Activated B cell treated with CpG ODN at 0.5 μM for 24 hours (primary cell): ENCODE measurements at regions of chr6 and their contacts with region 1.

Region 1: DNA sequence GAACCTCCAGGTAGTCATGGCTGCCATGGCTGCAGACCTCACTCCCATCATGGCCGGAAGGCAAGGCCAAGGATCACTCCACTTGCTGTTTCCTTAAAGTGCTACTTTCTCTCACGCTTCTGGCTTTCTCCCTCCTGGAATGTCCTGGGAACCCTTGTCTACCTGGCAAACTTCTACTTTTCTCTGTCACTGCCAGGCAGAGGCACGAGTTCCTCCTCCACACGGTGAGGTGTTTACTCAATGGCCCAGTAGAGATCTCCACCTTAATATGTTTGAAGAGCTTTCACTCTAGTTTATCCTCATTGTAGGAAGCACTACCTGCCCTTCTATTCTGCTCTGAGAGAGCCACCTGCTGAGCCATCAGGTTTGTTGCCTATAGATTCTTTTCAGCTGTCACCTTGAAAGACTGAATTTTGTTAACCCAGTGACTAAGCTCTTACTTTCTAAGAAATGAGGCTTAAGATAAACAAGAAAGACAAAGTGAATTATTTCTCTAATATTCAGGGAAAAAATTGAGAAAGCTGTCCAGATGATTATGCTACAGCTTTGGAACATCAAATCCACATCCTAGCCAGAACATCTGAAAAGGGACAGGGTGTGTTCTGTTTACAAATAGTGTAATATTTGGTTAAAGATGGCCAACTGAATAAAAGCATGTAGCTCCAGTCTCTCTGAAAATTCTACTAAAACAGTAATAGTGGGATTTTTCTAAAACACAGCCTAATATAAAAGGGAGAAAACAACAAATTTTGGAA is 54.9 kb downstream of the PLAGL1 start:
- DNase-seq: no peak
- ATAC-seq: no peak
- H3K4me3 Mint-ChIP-seq: no peak overlapping the region
- H3K27ac Mint-ChIP-seq: no peak overlapping the region
- H3K4me1 Mint-ChIP-seq: no peaks in the 10 kb centered on the region
- H3K27me3 Mint-ChIP-seq: no peaks in the 10 kb centered on the region
- CTCF ChIP-seq: no peak

Region 2: DNA sequence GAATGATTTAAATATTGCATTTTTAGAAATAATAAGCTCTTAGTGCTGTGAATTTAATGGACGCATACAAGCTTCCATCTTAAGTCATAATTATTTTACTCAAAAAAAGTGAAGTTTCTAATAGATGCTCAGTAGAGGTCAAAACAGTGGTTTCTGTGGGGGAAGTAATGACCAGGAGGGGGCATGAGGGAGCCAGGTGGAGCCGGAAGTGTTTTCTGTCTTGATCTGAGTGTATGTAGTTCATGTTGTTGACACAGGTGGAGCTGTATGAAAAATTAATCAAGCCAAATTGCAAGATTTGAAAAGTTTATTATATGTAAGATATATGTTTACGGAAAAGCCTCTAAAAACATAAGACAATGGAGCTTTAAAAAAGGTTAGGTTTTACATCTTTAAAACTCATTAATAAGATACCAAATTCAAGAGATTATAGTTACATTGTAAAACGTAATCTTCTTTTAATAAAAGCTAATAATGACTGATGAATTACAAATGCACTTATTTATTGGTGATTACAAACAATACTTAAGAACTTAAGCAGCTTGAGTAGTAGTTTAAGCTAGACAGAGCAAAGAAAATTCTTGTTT is 13.0 kb before region 1 on chr6:
- CTCF ChIA-PET with region 1: interaction called, 10 read pairs
- POLR2A ChIA-PET with region 1: no interaction called
- intact Hi-C with region 1: no loop called
- DNase-seq: no peak
- ATAC-seq: peak; percentile 98
- H3K4me3 Mint-ChIP-seq: no peak overlapping the region
- H3K27ac Mint-ChIP-seq: no peak overlapping the region
- H3K4me1 Mint-ChIP-seq: no peaks in the 10 kb centered on the region
- H3K27me3 Mint-ChIP-seq: no peaks in the 10 kb centered on the region
- CTCF ChIP-seq: no peak